ENCODE measurements at regions of chr14 and their contacts with region 1.

Region 1: GRCh38 chr14:90383075-90383730 is 13.6 kb upstream of the CALM1 start:
- DNase-seq: peak; percentile 98
- H3K4me3 Mint-ChIP-seq: no peak overlapping the region
- H3K27ac Mint-ChIP-seq: no peak overlapping the region
- H3K4me1 Mint-ChIP-seq: peaks cover 15% of the 10 kb centered on the region
- H3K27me3 Mint-ChIP-seq: no peaks in the 10 kb centered on the region

Region 2: GRCh38 chr14:90256354-90257131 is 126.7 kb before region 1 on chr14 and contains the start of gene PSMC1:
- intact Hi-C with region 1: loop called (anchors 5 kb)
- DNase-seq: peak; percentile 83
- H3K4me3 Mint-ChIP-seq: peak within 1 kb of the TSS; percentile 98
- H3K27ac Mint-ChIP-seq: peak within 1 kb of the TSS; percentile 93
- H3K4me1 Mint-ChIP-seq: peaks cover 19% of the 10 kb centered on the region
- H3K27me3 Mint-ChIP-seq: no peaks in the 10 kb centered on the region
- total RNA-seq, gene PSMC1: 162 and 167 TPM in 2 replicates

Region 3: DNA sequence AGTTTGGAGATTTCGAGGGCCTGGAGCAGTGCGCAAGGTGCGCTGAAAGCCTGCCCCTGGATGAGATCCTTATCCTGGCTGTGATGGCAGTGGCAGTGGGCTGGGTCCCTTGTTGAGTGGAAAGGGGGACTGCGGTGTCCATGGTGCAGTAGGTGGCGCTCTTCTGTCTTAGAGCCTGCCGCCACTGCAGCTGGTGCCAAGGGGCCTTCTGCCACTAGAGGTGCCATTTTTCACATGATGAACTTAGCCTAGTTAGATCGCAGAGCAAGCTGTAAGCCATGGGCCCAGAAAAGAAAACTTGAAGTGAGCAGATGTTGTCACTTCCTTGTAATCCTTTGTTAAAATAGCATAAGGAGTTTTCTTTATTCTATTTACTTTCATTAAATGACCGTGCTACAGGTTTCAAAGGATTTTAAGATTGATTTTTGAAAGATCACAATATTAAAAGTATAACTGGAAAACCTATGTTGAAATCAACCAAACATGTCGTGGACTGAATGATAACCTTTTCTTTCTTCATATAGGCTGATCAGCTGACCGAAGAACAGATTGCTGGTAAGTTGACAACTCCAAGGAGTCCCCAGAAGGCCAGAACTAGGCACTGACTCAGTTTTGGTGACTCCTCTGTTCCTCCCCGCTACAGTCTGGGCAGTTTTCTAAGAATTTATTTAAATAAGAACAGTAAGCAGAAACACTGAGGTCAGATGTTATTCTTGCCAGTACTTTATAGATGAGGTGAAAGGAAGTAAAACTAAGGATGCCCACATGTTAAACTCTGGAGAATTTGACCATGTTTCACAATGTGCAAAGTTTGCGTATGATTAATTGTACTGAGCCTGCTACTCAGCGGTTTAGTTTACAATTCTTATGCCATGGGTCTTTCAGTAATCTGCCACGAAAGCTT is 16.6 kb after region 1 on chr14:
- intact Hi-C with region 1: loop called (anchors 1 kb)
- DNase-seq: peak; percentile 82
- H3K4me3 Mint-ChIP-seq: peak overlapping the region; percentile 94
- H3K27ac Mint-ChIP-seq: peak overlapping the region; percentile 97
- H3K4me1 Mint-ChIP-seq: peaks cover 48% of the 10 kb centered on the region
- H3K27me3 Mint-ChIP-seq: peaks cover 1% of the 10 kb centered on the region

Region 4: DNA sequence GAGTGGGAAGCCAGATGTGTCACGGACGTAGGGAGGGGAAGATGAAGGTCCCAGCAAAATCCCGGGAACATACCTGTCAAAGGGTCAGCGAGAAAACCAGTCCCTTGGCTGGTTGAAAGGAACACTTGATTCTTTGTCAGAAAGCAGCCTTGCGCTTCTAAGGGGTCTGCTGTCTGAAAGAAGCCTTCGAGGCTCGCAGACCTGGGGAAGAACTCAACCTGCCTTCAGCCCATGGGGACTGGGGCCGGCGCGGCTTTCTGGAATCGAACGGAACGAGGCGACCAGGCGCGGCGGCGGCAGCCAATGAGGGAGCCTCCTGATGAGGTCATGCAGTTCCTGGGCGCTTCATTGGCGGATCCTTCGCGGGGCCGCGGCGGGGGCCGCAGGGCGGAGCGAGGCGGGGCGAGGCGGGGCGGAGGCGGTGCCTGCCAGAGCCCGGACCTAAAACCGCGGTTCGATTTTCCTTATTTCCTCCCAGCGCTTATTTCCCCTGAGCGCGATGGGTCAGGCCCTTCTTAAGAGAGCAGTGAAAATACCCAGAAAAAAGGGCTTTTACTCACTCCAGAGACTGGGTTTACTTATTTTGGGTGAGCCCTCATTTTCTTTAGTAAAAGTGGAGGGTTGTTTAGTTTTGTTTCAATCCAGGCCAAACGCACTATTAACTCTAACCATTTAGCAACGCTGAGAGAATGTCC is 444.9 kb after region 1 on chr14:
- intact Hi-C with region 1: loop called (anchors 5 kb)
- DNase-seq: peak; percentile 91
- H3K4me3 Mint-ChIP-seq: peak overlapping the region; percentile 76
- H3K27ac Mint-ChIP-seq: peak overlapping the region; percentile 92
- H3K4me1 Mint-ChIP-seq: peaks cover 20% of the 10 kb centered on the region
- H3K27me3 Mint-ChIP-seq: no peaks in the 10 kb centered on the region

Region 5: DNA sequence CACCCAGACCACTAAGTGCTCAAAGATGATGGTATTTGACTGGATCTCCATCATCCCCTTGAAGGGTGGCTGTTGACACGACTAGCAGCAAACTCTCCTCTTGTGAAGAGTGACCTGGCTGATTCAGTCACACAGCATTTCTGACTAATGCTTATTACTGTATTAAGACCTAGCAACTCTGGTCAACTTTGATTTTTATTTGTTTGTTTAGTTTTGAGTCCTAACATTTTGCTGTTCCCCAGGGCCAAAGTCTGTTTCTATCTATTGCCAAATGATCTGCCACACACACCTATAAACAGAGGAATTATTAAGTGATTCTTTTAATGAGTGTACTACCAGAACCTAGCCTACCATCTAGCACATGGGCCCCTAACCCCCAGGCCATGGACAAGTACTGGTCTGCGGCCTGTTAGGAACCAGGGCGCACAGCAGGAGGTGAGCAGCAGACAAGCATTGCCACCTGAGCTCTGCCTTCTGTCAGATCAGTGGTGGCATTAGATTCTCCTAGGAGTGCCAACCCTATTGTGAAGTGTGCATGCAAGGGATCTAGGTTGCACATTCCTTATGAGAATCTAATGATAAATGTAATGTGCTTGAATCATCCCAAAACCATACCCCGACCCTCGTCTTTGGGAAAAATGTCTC is 557.2 kb after region 1 on chr14:
- intact Hi-C with region 1: no loop called
- DNase-seq: no peak
- H3K4me3 Mint-ChIP-seq: no peak overlapping the region
- H3K27ac Mint-ChIP-seq: no peak overlapping the region
- H3K4me1 Mint-ChIP-seq: no peaks in the 10 kb centered on the region
- H3K27me3 Mint-ChIP-seq: no peaks in the 10 kb centered on the region